Caco-2 (cell line): ENCODE measurements at regions of chr2 and their contacts with region 1.

Region 1: DNA sequence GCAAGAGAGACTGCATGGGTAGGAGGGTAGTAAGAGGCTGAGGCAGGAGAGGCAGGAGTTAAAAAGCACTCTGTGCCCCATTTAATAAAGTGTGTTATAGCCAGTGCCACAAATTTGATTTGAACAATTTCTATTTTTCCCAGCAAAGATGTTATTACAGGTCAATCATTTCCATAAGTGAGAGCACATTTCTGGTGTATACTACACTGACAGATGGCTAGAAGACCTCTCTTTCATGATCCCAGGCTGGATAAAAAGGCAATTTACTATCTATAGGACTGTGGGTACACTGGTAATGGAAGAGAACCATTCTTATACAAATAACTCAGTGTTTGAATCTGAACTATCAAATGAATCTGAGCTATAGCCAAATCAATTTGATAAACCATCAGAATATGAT is 176.2 kb downstream of the FSHR start:
- DNase-seq: no peak
- H3K4me3 ChIP-seq: no peak overlapping the region
- H3K4me3 Mint-ChIP-seq: no peak overlapping the region
- H3K27ac Mint-ChIP-seq: no peak overlapping the region
- H3K4me1 ChIP-seq: peaks cover 15% of the 10 kb centered on the region
- H3K4me1 Mint-ChIP-seq: peaks cover 12% of the 10 kb centered on the region
- H3K27me3 ChIP-seq: no peaks in the 10 kb centered on the region
- H3K27me3 Mint-ChIP-seq: peaks cover 3% of the 10 kb centered on the region
- CTCF ChIP-seq: no peak

Region 2: DNA sequence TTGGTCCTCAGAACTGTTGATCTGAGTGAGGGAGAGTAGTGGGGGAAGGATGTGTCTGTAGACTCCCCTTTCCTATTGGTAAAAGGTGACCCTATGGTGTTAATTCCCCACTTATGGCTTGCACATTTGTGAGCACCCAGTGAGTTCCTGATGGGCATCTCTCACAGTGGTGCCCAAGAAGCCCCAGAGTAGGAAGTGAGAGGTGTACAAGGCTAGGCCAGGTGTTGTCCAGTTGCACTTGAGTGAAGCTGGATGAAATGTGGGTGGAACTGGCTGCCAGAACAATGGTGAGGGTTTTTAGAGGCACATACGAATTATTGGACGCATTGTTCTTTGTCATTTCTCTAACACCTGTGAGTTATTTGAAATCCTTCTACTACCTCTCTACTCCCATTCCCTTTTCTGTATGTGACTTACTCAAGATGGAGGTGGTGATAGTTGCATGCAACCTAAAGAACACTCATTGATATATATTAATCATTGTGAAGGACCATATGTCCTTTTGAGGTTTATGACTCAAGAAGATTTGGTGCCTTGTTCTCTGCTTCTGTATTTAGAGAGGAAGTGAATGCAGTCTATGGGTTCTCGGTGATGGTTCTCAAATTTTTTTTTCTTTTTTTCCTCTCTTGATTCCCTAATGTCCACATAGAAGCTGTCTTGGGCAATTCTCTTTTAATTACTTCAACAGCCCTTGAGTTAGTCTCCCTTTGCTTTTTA is 13.4 kb after region 1 on chr2:
- CTCF ChIA-PET with region 1: no interaction called
- POLR2A ChIA-PET with region 1: no interaction called
- intact Hi-C with region 1: loop called (anchors 1 kb)
- DNase-seq: no peak
- H3K4me3 ChIP-seq: no peak overlapping the region
- H3K4me3 Mint-ChIP-seq: no peak overlapping the region
- H3K27ac Mint-ChIP-seq: no peak overlapping the region
- H3K4me1 ChIP-seq: no peaks in the 10 kb centered on the region
- H3K4me1 Mint-ChIP-seq: no peaks in the 10 kb centered on the region
- H3K27me3 ChIP-seq: no peaks in the 10 kb centered on the region
- H3K27me3 Mint-ChIP-seq: peaks cover 9% of the 10 kb centered on the region
- CTCF ChIP-seq: no peak

Region 3: DNA sequence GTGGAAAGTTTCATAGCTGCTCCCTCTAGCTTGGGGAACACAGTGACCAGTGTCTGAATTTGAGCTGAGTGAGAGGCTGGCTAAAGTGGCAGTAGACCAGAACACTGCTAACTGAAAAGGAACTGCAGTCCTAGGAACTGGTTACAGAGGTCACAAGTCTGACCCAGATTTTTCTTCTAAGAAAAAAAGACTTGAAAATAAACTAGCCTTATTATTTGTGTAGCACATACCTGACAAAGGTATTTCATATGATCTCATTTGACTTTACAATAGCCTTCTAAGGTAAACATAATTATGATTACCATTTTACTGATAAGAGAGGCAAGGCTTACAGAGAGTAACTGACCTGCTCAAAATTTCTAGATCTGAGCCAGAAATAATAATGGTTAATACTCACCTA is 22.6 kb after region 1 on chr2:
- CTCF ChIA-PET with region 1: no interaction called
- POLR2A ChIA-PET with region 1: no interaction called
- intact Hi-C with region 1: loop called (anchors 2 kb)
- DNase-seq: peak in 1 of 2 experiments; percentile 42
- H3K4me3 ChIP-seq: no peak overlapping the region
- H3K4me3 Mint-ChIP-seq: peak overlapping the region; percentile 29
- H3K27ac Mint-ChIP-seq: peak overlapping the region; percentile 83
- H3K4me1 ChIP-seq: peaks cover 26% of the 10 kb centered on the region
- H3K4me1 Mint-ChIP-seq: peaks cover 18% of the 10 kb centered on the region
- H3K27me3 ChIP-seq: no peaks in the 10 kb centered on the region
- H3K27me3 Mint-ChIP-seq: no peaks in the 10 kb centered on the region
- CTCF ChIP-seq: no peak